ENCODE measurements at regions of chr12 and their contacts with region 1.

Region 1: DNA sequence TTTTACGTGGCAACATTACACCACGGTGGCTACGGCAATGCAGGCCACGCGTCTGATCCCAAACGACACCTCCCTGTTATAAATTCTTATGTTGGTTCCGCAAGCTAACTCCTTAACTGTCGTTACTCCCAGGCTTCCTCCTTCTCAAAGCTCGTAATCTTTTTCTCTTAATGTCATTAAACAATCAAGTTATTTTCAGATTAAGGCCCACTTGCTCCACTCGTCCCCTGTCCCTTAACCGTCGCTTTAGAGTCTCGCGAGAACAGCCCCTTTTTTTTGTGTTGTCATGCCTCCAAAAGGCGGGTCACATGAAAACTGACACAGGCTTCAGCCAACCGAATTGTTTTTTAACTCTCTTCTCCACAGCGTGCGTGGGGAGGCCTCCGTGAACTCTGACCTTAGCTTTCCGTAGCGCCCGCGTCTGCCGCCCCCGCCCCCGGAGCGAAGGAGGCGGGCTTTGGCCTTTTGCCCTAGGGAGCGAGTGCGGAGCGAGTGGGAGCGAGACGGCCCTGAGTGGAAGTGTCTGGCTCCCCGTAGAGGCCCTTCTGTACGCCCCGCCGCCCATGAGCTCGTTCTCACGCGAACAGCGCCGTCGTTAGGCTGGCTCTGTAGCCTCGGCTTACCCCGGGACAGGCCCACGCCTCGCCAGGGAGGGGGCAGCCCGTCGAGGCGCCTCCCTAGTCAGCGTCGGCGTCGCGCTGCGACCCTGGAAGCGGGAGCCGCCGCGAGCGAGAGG is at the start of gene CAND1:
- DNase-seq: peak; percentile 94
- H3K4me3 Mint-ChIP-seq: peak within 1 kb of the TSS; percentile 92
- H3K27ac Mint-ChIP-seq: peak within 1 kb of the TSS; percentile 99
- H3K4me1 Mint-ChIP-seq: peaks cover 39% of the 10 kb centered on the region
- H3K27me3 Mint-ChIP-seq: no peaks in the 10 kb centered on the region
- total RNA-seq, gene CAND1: 185 and 209 TPM in 2 replicates

Region 2: DNA sequence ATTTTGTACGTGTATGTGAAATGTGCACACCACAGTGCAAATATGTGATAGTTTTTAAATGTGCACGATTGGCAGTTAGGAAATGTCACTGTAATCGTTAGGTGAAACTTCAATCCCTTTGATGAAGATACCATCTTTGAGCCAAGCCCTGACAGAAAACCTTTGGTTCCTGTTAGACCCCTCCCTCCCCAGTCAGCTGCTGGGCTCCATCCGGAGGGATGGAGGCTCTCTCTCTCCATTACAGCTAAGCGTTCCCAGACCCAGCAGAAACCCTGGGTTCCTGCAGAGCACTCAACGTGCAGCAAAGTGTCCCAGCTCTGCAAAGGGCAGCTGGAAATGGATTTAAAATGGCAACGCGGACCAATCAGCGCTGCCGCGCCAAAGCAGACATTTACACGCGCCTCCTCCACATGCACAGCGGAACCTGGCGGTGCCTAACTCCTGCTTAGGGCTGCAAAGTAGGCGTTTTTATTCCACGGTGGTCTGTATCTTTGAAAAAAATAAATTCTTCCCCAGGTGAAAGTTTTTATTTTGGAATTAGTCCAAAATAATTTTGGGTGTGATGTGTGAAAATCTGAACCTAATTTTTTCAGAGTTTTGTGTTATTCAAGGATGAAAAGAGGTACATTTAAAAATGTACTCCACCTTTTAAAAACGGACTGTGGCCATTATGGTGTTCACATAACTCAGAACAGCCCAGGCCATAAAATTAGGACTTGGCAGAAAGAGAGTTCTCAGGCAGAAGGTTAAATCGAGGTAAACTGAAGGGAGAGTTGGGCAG is 1446.1 kb before region 1 on chr12:
- intact Hi-C with region 1: no loop called
- DNase-seq: no peak
- H3K4me3 Mint-ChIP-seq: peak overlapping the region; percentile 53
- H3K27ac Mint-ChIP-seq: no peak overlapping the region
- H3K4me1 Mint-ChIP-seq: peaks cover 15% of the 10 kb centered on the region
- H3K27me3 Mint-ChIP-seq: peaks cover 52% of the 10 kb centered on the region

Region 3: DNA sequence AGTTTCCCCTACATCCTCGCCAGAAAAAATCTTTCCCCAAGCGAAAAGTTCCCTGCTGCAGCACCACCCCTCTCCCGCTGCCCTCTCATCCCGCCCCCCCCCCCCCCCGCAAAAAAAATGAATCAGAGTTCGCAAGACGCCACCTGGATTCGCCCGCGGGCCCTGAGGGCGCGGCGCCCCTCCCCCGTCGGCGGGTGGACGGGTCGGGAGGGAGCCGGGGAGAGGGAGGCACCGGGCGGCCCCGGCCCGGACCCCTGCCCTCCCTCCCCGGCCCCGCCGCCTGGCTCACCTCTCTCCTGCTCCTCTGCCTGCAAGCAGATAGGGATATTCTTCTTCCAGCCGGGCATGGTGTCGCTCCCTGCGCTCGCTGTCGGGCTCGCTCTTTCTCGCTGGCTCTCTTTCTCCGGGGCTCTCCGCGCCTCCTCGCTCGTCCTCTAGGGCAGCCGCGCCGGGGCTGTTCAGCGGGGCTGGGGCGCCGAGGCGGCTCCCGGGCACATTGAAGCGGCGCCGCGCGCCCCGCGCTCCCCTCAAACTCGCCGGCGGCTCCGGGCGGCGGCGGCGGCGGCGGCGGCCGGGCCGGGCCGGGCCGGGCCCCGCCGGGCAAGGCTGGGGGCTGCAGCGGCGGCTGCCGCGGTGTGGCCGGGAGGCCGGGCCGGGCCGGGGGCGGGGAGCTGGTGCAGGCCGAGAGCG is 200.2 kb before region 1 on chr12:
- intact Hi-C with region 1: loop called (anchors 2 kb)
- DNase-seq: no peak
- H3K4me3 Mint-ChIP-seq: peak overlapping the region; percentile 83
- H3K27ac Mint-ChIP-seq: no peak overlapping the region
- H3K4me1 Mint-ChIP-seq: peaks cover 17% of the 10 kb centered on the region
- H3K27me3 Mint-ChIP-seq: peaks cover 52% of the 10 kb centered on the region

Region 4: GRCh38 chr12:67280572-67280971 is 11.5 kb after region 1 on chr12:
- intact Hi-C with region 1: no loop called
- DNase-seq: no peak
- H3K4me3 Mint-ChIP-seq: no peak overlapping the region
- H3K27ac Mint-ChIP-seq: no peak overlapping the region
- H3K4me1 Mint-ChIP-seq: peaks cover 48% of the 10 kb centered on the region
- H3K27me3 Mint-ChIP-seq: no peaks in the 10 kb centered on the region

Region 5: GRCh38 chr12:67355578-67356379 is 86.7 kb after region 1 on chr12:
- intact Hi-C with region 1: no loop called
- DNase-seq: no peak
- H3K4me3 Mint-ChIP-seq: no peak overlapping the region
- H3K27ac Mint-ChIP-seq: no peak overlapping the region
- H3K4me1 Mint-ChIP-seq: peaks cover 23% of the 10 kb centered on the region
- H3K27me3 Mint-ChIP-seq: no peaks in the 10 kb centered on the region

Region 6: GRCh38 chr12:67452119-67452805 is 183.2 kb after region 1 on chr12:
- intact Hi-C with region 1: loop called (anchors 2 kb)
- DNase-seq: no peak
- H3K4me3 Mint-ChIP-seq: peak overlapping the region; percentile 12
- H3K27ac Mint-ChIP-seq: peak overlapping the region; percentile 82
- H3K4me1 Mint-ChIP-seq: peaks cover 47% of the 10 kb centered on the region
- H3K27me3 Mint-ChIP-seq: peaks cover 20% of the 10 kb centered on the region

Region 7: DNA sequence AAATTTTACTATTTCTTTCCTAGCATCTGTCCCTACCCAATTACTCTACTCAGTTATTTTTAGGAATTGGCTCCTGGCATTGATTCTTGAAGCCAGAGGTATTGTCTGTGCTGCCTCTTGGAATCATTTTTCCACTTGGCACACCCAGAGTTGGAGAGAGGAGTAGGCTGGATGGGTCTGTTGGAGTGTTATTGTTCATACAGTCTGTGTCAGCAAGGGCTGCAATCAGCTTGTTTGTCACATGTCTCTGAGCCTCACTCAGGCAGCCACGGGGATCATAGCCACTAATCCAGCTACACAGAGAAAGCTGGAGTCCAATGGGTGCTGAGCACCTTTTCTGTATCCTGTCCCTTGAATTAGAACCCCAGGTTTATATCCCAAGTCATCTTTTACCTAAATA is 203.5 kb after region 1 on chr12:
- intact Hi-C with region 1: no loop called
- DNase-seq: no peak
- H3K4me3 Mint-ChIP-seq: no peak overlapping the region
- H3K27ac Mint-ChIP-seq: no peak overlapping the region
- H3K4me1 Mint-ChIP-seq: peaks cover 8% of the 10 kb centered on the region
- H3K27me3 Mint-ChIP-seq: peaks cover 13% of the 10 kb centered on the region

Region 8: GRCh38 chr12:68034567-68034966 is 765.5 kb after region 1 on chr12:
- intact Hi-C with region 1: loop called (anchors 2 kb)
- DNase-seq: no peak
- H3K4me3 Mint-ChIP-seq: no peak overlapping the region
- H3K27ac Mint-ChIP-seq: no peak overlapping the region
- H3K4me1 Mint-ChIP-seq: peaks cover 77% of the 10 kb centered on the region
- H3K27me3 Mint-ChIP-seq: no peaks in the 10 kb centered on the region